CD8-positive, alpha-beta T cell (primary cell): ENCODE measurements at regions of chr11 and their contacts with region 1.

Region 1: DNA sequence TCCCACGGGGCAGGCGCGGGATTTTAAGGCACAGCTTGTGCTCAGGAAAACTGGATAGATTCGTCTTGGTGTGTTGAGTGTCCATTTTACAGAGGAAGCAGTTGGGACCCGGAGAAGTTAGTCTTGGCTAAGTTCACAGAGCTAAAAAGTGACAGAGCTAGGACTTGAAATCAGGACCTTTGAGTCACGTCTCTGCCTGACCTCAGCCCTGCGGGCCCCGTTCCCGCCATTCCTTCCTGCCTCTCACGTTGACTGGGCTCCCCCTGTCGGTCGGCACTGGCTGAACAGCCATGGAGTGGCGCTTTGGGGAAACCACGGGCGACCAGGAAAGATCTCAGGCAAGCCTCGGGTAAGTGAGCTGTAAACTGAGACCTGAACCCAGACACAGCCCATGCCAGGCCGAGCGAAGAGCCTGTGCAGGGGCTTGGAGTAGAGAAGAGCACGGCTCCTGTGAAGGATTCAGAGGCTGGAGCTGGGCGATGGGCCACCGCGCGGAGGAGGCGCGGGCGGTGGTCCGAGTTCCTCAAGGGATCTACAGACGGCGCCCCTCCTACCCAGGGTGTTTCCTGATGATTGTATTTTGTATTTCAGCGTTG is 54.1 kb downstream of the WNT11 start:
- DNase-seq: peak; percentile 58 to 88 (median 81)
- ATAC-seq: peak; percentile 90
- H3K4me3 ChIP-seq: peak overlapping the region; percentile 28 to 49
- H3K4me3 Mint-ChIP-seq: peak overlapping the region; percentile 74
- H3K27ac ChIP-seq: no peak overlapping the region
- H3K27ac Mint-ChIP-seq: no peak overlapping the region
- H3K4me1 ChIP-seq: peaks cover 13% of the 10 kb centered on the region
- H3K4me1 Mint-ChIP-seq: peaks cover 25% of the 10 kb centered on the region
- H3K27me3 ChIP-seq: no peaks in the 10 kb centered on the region
- H3K27me3 Mint-ChIP-seq: peaks cover 2% of the 10 kb centered on the region
- CTCF ChIP-seq: peak; percentile 78

Region 2: DNA sequence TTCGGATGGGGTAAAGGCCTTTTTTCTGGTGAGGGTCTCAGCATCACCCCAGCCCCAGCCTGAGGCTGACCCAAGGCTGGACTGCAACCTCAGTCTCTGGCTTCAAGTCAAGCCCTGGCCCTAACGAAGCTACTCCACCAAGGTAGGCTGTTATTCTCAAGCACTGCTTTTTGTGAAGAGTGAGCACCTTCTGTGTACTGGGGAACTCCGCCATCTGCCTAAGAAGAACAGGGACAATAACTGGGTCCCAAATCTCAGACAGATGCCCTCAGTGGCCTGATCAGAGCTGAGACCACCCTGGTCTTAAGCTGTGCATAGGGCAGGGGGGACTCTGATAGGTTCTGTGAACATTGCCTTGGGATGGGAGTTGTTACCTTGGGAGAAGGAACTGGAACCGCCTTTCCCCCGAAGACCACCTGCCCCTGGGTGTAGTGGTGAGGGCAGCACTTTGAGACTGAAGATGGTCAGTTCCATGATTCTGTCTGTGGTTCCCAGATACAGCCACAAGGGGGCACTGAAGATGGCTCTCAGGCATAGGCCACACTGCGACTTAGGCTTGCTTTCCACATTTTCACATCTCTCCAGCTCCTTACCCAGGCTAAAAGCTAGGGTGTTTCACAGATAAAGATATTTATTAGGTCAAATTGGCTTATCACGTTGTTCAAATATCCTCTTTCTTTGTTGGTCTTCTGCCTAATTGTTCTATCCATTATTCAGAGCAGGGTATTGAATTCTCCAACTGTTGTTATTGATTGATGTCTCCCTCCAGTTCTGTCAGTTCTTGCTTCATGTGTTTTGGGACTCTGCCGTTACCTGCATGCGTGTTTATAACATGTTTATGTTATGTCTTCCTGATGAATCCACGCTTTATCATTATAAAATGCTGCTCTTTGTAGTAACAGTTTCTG is 349.0 kb before region 1 on chr11:
- CTCF ChIA-PET with region 1: interaction called, 15 read pairs
- POLR2A ChIA-PET with region 1: no interaction called
- intact Hi-C with region 1: loop called in 1 of 2 experiments (anchors 5 kb)
- DNase-seq: peak; percentile 51 to 80 (median 75)
- ATAC-seq: peak; percentile 98
- H3K4me3 ChIP-seq: no peak overlapping the region
- H3K4me3 Mint-ChIP-seq: no peak overlapping the region
- H3K27ac ChIP-seq: no peak overlapping the region
- H3K27ac Mint-ChIP-seq: no peak overlapping the region
- H3K4me1 ChIP-seq: no peaks in the 10 kb centered on the region
- H3K4me1 Mint-ChIP-seq: peaks cover 5% of the 10 kb centered on the region
- H3K27me3 ChIP-seq: no peaks in the 10 kb centered on the region
- H3K27me3 Mint-ChIP-seq: no peaks in the 10 kb centered on the region
- CTCF ChIP-seq: peak; percentile 91

Region 3: GRCh38 chr11:76117519-76117918 is 34.7 kb before region 1 on chr11:
- CTCF ChIA-PET with region 1: interaction called, 11 read pairs
- POLR2A ChIA-PET with region 1: no interaction called
- intact Hi-C with region 1: no loop called
- DNase-seq: no peak
- ATAC-seq: no peak
- H3K4me3 ChIP-seq: no peak overlapping the region
- H3K4me3 Mint-ChIP-seq: no peak overlapping the region
- H3K27ac ChIP-seq: no peak overlapping the region
- H3K27ac Mint-ChIP-seq: no peak overlapping the region
- H3K4me1 ChIP-seq: no peaks in the 10 kb centered on the region
- H3K4me1 Mint-ChIP-seq: no peaks in the 10 kb centered on the region
- H3K27me3 ChIP-seq: no peaks in the 10 kb centered on the region
- H3K27me3 Mint-ChIP-seq: no peaks in the 10 kb centered on the region
- CTCF ChIP-seq: no peak

Region 4: GRCh38 chr11:76140912-76141574 is 11.1 kb before region 1 on chr11:
- CTCF ChIA-PET with region 1: interaction called, 29 read pairs
- POLR2A ChIA-PET with region 1: no interaction called
- intact Hi-C with region 1: no loop called
- DNase-seq: no peak
- ATAC-seq: no peak
- H3K4me3 ChIP-seq: no peak overlapping the region
- H3K4me3 Mint-ChIP-seq: no peak overlapping the region
- H3K27ac ChIP-seq: no peak overlapping the region
- H3K27ac Mint-ChIP-seq: no peak overlapping the region
- H3K4me1 ChIP-seq: no peaks in the 10 kb centered on the region
- H3K4me1 Mint-ChIP-seq: no peaks in the 10 kb centered on the region
- H3K27me3 ChIP-seq: no peaks in the 10 kb centered on the region
- H3K27me3 Mint-ChIP-seq: no peaks in the 10 kb centered on the region
- CTCF ChIP-seq: no peak